ENCODE measurements at regions of chr14 and their contacts with region 1.

Region 1: DNA sequence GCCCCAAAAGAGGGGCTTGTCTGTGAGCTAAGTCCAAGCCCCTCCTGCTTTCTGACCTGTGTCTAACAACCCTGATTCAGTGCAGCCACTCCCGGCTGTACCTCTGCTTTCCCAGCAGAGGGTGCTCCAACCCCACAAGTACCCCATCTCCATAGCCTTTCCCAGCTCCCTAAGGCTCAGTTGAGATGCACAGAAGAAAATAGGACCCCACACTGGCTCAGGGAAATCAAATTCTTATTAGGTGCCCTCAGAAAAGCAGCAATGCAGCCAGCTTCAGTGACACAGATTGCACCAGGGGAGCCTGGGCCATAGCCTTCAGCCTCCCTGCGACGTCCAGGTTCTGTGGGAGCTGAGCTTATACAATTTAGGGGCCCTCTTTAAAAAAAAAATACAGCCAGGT is 49.9 kb downstream of the LRRC74A start:
- DNase-seq: peak; percentile 57
- ATAC-seq: peak; percentile 90
- H3K4me3 Mint-ChIP-seq: no peak overlapping the region
- H3K27ac Mint-ChIP-seq: no peak overlapping the region
- H3K4me1 Mint-ChIP-seq: peaks cover 1% of the 10 kb centered on the region
- H3K27me3 Mint-ChIP-seq: peaks cover 3% of the 10 kb centered on the region
- CTCF ChIP-seq: peak; percentile 78

Region 2: GRCh38 chr14:76742966-76743365 is 133.1 kb before region 1 on chr14:
- CTCF ChIA-PET with region 1: no interaction called
- POLR2A ChIA-PET with region 1: no interaction called
- intact Hi-C with region 1: no loop called
- DNase-seq: no peak
- ATAC-seq: no peak
- H3K4me3 Mint-ChIP-seq: no peak overlapping the region
- H3K27ac Mint-ChIP-seq: no peak overlapping the region
- H3K4me1 Mint-ChIP-seq: no peaks in the 10 kb centered on the region
- H3K27me3 Mint-ChIP-seq: peaks cover 20% of the 10 kb centered on the region
- CTCF ChIP-seq: no peak

Region 3: DNA sequence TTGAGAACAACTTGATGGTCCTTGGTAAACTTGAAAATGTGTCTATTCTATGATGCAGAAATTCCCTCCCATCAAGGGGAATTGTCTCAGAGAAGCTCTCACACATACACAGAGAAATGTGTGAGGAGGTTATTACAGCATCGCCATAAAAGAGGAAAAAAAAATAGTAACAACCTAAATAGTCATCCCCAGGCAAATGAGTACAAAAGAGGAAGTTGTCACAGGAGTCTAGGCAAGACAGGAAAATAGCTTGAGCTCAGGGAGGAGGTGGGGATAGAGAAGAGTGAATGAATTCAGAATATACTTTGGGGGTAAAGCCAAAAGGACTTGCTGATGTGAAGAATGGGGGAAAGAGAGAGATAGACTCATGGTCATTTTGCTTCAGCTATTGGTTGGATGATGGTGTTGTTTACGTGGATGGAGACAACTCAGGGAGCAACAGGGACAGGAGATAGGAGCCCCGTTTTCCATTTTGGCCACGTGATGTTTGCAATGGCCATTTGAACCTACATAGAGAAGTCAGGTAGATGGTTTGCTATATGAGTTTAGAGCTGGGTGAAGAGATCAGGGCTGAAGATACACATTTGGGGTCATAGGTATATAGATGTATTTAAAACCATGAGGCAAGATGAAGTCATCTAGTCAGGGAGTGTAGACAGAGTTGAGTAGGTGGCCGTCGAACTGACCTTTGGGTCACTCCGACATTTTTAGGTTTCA is 29.6 kb before region 1 on chr14:
- CTCF ChIA-PET with region 1: interaction called, 10 read pairs
- POLR2A ChIA-PET with region 1: no interaction called
- intact Hi-C with region 1: no loop called
- DNase-seq: no peak
- ATAC-seq: no peak
- H3K4me3 Mint-ChIP-seq: no peak overlapping the region
- H3K27ac Mint-ChIP-seq: no peak overlapping the region
- H3K4me1 Mint-ChIP-seq: peaks cover 6% of the 10 kb centered on the region
- H3K27me3 Mint-ChIP-seq: peaks cover 5% of the 10 kb centered on the region
- CTCF ChIP-seq: no peak

Region 4: DNA sequence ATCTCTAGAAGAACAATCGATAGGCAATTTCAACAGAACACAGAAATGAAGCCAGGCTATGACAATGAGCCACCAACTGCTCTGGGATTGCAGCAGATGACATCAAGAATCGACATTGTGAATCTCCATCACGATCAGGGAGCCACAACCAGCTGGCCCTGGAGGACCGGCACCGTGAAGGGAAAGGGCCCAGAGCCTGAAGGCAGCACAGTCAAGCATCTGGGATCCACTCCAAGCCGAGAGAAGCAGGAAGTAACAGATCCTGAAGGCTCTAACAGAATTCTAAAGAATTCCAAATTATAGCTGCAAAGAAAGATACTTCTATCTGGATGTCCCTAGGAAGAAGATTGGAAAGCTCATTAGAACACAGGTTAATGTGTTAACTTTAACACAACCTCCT is 11.1 kb after region 1 on chr14:
- CTCF ChIA-PET with region 1: interaction called, 58 read pairs
- POLR2A ChIA-PET with region 1: interaction called, 3 read pairs
- intact Hi-C with region 1: no loop called
- DNase-seq: no peak
- ATAC-seq: no peak
- H3K4me3 Mint-ChIP-seq: no peak overlapping the region
- H3K27ac Mint-ChIP-seq: no peak overlapping the region
- H3K4me1 Mint-ChIP-seq: peaks cover 8% of the 10 kb centered on the region
- H3K27me3 Mint-ChIP-seq: no peaks in the 10 kb centered on the region
- CTCF ChIP-seq: no peak

Region 5: DNA sequence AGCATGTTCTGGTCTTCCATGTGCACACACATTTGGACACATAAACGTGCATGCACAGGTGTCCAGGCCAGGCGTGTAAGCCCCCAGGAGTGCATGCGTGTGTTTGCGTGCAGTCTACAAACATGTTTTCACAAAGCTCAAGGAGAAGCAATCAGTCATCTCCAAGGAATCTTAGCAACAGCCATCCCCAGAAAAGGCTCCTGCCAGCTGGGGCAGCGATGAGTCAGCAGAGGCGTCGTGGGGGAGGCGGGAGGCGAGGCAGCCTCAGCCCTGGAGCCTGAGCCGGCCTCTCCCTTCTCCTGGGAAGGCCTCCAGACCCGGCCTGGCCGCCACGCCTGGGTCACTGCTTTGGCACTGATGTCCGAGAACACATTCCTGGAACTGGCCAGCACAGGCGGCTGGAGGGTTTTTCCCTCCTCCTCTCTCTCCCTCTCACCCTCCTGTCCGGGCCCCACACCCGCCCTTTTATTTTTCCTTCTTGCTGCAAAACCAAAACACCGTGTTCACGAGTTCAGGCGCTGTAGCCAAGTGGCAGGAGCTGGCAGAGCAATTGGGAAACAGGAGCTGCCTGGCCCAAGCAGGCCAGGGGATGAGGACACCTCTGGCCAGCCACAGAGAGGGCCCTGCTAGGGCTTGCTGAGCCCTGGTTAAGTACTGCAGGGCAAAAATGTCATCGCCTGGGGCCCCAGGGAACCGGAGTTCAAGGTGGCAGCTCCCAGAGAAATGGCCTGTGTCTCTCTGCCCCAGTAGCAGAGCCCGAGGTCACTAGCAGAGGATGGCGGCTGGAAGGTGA is 42.9 kb after region 1 on chr14:
- CTCF ChIA-PET with region 1: interaction called, 34 read pairs
- POLR2A ChIA-PET with region 1: no interaction called
- intact Hi-C with region 1: loop called (anchors 5 kb)
- DNase-seq: peak; percentile 42
- ATAC-seq: no peak
- H3K4me3 Mint-ChIP-seq: peak overlapping the region; percentile 34
- H3K27ac Mint-ChIP-seq: peak overlapping the region; percentile 43
- H3K4me1 Mint-ChIP-seq: peaks cover 46% of the 10 kb centered on the region
- H3K27me3 Mint-ChIP-seq: no peaks in the 10 kb centered on the region
- CTCF ChIP-seq: no peak

Region 6: GRCh38 chr14:76975812-76976211 is 99.7 kb after region 1 on chr14:
- CTCF ChIA-PET with region 1: no interaction called
- POLR2A ChIA-PET with region 1: no interaction called
- intact Hi-C with region 1: no loop called
- DNase-seq: no peak
- ATAC-seq: no peak
- H3K4me3 Mint-ChIP-seq: no peak overlapping the region
- H3K27ac Mint-ChIP-seq: no peak overlapping the region
- H3K4me1 Mint-ChIP-seq: peaks cover 36% of the 10 kb centered on the region
- H3K27me3 Mint-ChIP-seq: no peaks in the 10 kb centered on the region
- CTCF ChIP-seq: no peak

Region 7: DNA sequence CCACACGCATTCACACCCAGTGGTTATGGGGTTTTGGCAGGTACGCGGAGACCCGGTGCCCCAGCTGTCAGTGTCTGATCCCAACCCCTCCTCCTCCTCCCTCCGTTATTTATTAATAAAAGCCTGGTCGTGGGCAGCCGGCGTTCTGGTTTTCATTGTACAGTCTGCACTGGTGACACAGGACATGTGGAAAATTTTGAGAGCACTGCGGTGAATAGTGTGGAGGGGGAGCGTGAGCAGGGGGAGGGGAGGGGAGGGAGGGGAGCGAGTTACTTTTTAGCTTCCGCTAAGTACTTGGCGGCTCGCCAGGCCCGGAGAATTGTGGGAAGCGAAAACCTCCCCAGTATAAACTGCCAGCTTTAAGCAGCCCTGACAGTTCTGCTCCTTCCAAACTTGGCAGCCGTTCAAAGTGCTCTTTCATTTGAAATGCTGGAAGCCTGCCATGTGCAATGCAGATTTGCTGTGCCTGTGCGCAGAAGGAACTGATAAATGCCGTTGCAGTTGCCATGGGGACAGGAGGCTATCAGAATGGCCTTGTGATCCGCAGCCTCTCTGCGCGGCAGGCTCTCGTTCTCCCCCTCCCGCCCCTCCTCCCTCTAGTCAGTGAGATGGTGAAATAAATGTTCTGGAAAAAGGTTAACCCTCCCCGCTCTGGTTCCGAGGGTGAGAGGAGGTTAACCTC is 164.1 kb after region 1 on chr14:
- CTCF ChIA-PET with region 1: interaction called, 12 read pairs
- POLR2A ChIA-PET with region 1: no interaction called
- intact Hi-C with region 1: no loop called
- DNase-seq: peak; percentile 97
- ATAC-seq: peak; percentile 66
- H3K4me3 Mint-ChIP-seq: peak overlapping the region; percentile 68
- H3K27ac Mint-ChIP-seq: peak overlapping the region; percentile 96
- H3K4me1 Mint-ChIP-seq: peaks cover 82% of the 10 kb centered on the region
- H3K27me3 Mint-ChIP-seq: no peaks in the 10 kb centered on the region
- CTCF ChIP-seq: no peak

Region 8: GRCh38 chr14:77067632-77068514 is 191.8 kb after region 1 on chr14:
- CTCF ChIA-PET with region 1: interaction called, 452 read pairs
- POLR2A ChIA-PET with region 1: interaction called, 3 read pairs
- intact Hi-C with region 1: loop called (anchors 1 kb)
- DNase-seq: peak; percentile 68
- ATAC-seq: peak; percentile 79
- H3K4me3 Mint-ChIP-seq: no peak overlapping the region
- H3K27ac Mint-ChIP-seq: no peak overlapping the region
- H3K4me1 Mint-ChIP-seq: no peaks in the 10 kb centered on the region
- H3K27me3 Mint-ChIP-seq: peaks cover 3% of the 10 kb centered on the region
- CTCF ChIP-seq: peak; percentile 83

Region 9: GRCh38 chr14:77097700-77098528 is 221.8 kb after region 1 on chr14 and contains the start of gene CIPC:
- CTCF ChIA-PET with region 1: interaction called, 111 read pairs
- POLR2A ChIA-PET with region 1: no interaction called
- intact Hi-C with region 1: no loop called
- DNase-seq: peak; percentile 99
- ATAC-seq: peak; percentile 94
- H3K4me3 Mint-ChIP-seq: peak within 1 kb of the TSS; percentile 93
- H3K27ac Mint-ChIP-seq: peak within 1 kb of the TSS; percentile 99
- H3K4me1 Mint-ChIP-seq: peaks cover 35% of the 10 kb centered on the region
- H3K27me3 Mint-ChIP-seq: no peaks in the 10 kb centered on the region
- CTCF ChIP-seq: no peak
- total RNA-seq, gene CIPC: 8.8 to 9.6 TPM

Measured in activated CD8-positive, alpha-beta T cell treated with anti-CD3 and anti-CD28 coated beads for 36 hours (primary cell).